ENCODE measurements at regions of chr1 and their contacts with region 1.

Region 1: GRCh38 chr1:54715493-54716298 is at the start of gene TTC4:
- DNase-seq: peak; percentile 75 to 86
- ATAC-seq: peak; percentile 97 to 99 (median 99)
- H3K4me3 ChIP-seq: peak within 1 kb of the TSS; percentile 65 to 99 (median 80)
- H3K27ac ChIP-seq: peak within 1 kb of the TSS in 9 of 10 donors; percentile 54 to 85 (median 78)
- H3K4me1 ChIP-seq: peaks cover 0 to 20% (median 13%) of the 10 kb centered on the region in 9 donors
- H3K27me3 ChIP-seq: no peaks in the 10 kb centered on the region
- CTCF ChIP-seq: peak in 3 of 9 donors; percentile 17 to 26 (median 19)
- total RNA-seq, gene TTC4: 12.0 to 17.0 (median 15.1) TPM

Region 2: DNA sequence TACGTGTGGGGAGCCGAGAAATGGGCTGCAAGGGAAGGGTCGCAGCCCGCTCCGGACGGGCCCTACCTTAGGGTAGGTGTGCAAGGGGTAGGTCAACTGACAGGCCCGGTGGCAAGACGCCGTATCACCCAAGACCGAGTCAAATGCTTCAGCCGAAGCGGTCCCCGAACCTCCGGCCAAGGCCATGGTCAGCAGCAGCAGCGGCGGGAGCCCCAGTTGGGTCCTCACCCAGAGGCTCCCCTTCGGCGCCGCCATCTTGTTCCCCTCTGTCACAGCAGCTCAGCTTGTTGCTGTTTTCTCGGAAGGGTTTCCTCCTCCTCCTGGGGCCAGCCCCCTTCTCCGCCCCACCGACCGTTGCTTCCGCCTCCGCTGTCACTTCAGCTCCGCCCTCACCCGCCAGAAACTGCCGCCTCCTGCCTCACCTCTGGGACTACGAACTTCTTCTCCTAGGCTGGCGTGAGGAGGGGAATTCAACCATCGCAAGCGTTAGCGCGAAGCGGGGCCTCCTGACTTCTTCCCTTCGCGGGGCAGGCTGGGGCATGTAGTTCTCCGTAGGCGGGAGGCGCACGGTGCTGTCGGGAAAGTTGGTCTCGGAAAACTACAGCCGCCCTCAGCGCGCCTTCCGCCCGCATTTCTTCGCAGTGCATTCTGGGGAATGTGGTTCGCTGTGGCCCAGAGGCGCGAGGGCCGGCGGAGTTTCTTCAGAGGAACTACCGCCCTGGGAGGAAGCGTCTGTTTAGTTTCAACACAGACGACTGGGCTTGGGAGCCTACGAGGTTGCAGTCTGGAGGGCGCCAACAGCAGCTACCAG is 662.6 kb before region 1 on chr1 and contains the starts of genes TCEANC2 and TMEM59:
- intact Hi-C with region 1: loop called in 1 of 10 experiments (anchors 10 kb)
- DNase-seq: peak; percentile 96 to 98
- ATAC-seq: peak; percentile 96 to 98 (median 97)
- H3K4me3 ChIP-seq: peak within 1 kb of the TSS; percentile 78 to 93 (median 85)
- H3K27ac ChIP-seq: peak within 1 kb of the TSS; percentile 81 to 98 (median 95)
- H3K4me1 ChIP-seq: peaks cover 9 to 56% (median 49%) of the 10 kb centered on the region in 9 donors
- H3K27me3 ChIP-seq: no peaks in the 10 kb centered on the region
- CTCF ChIP-seq: no peak
- total RNA-seq, gene TCEANC2: 2.3 to 5.9 (median 4.1) TPM
- total RNA-seq, gene TMEM59: 285 to 474 (median 345) TPM

Region 3: DNA sequence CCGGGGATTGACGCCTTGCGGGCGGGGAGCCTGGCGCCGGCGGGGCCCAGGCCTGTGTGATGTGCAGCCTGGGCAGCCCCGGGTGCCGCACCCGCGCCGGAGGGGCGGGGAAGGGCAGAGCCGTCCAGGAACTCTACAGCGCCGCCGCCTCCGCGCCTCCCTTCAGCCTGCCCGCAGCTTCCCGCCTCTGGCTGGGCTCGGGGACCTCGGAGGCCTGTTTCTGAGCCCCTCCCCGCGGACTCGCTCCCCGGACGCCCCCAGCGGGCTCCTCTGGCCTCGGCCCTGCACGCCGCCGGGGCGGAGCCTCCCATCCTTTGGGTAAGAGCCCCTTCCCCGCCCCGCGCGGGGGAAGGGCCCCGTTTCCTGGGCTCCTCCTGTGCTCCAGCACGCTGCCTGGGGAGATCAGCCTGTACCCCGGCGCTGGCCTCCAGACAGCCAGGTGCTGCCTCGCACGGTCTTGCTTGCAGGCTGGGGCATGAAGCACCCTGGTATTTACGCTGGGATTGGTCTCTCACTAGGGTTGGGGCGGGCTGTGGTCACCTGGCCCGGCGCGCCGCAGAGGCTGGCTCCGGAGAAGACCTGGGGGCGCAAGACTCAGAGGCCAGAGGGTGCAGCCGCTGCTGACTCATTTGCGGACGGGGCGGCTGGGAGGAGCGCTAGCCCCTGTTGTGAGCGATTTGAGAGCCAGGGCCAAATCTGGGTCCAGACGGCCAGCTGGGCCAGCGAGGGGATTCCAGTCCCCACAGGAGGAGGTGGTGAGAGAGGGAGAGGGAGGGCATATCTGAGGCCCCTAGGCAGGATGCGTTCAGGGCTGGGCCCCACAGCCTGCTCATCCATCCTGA is 173.4 kb before region 1 on chr1:
- intact Hi-C with region 1: loop called in 1 of 10 experiments (anchors 10 kb)
- DNase-seq: peak in 1 of 2 donors; percentile 69
- ATAC-seq: peak; percentile 72 to 89 (median 84)
- H3K4me3 ChIP-seq: peak overlapping the region; percentile 7 to 67 (median 52)
- H3K27ac ChIP-seq: peak overlapping the region in 8 of 10 donors; percentile 19 to 78 (median 62)
- H3K4me1 ChIP-seq: peaks cover 3 to 42% (median 23%) of the 10 kb centered on the region in 9 donors
- H3K27me3 ChIP-seq: peaks cover 0 to 7% (median 7%) of the 10 kb centered on the region in 7 donors
- CTCF ChIP-seq: peak in 2 of 9 donors; percentile 7 to 39

Region 4: GRCh38 chr1:54764133-54764921 is 48.6 kb after region 1 on chr1 and contains the start of gene PARS2:
- intact Hi-C with region 1: loop called in 1 of 10 experiments (anchors 2 kb)
- DNase-seq: peak; percentile 96 to 97
- ATAC-seq: peak; percentile 98 to 100 (median 99)
- H3K4me3 ChIP-seq: peak within 1 kb of the TSS; percentile 45 to 97 (median 78)
- H3K27ac ChIP-seq: peak within 1 kb of the TSS in 9 of 10 donors; percentile 15 to 81 (median 69)
- H3K4me1 ChIP-seq: peaks cover 0 to 19% (median 13%) of the 10 kb centered on the region in 9 donors
- H3K27me3 ChIP-seq: no peaks in the 10 kb centered on the region
- CTCF ChIP-seq: no peak
- total RNA-seq, gene PARS2: 3.7 to 5.6 (median 4.2) TPM